ENCODE measurements at regions of chr17 and their contacts with region 1.

Region 1: GRCh38 chr17:32609884-32610650 is 123.3 kb downstream of the CDK5R1 start:
- DNase-seq: no peak
- H3K4me3 ChIP-seq: no peak overlapping the region
- H3K27ac ChIP-seq: no peak overlapping the region
- H3K4me1 ChIP-seq: peaks cover 0 to 11% (median 7%) of the 10 kb centered on the region in 6 donors
- H3K27me3 ChIP-seq: no peaks in the 10 kb centered on the region
- CTCF ChIP-seq: no peak
- POLR2A ChIP-seq: no peak

Region 2: DNA sequence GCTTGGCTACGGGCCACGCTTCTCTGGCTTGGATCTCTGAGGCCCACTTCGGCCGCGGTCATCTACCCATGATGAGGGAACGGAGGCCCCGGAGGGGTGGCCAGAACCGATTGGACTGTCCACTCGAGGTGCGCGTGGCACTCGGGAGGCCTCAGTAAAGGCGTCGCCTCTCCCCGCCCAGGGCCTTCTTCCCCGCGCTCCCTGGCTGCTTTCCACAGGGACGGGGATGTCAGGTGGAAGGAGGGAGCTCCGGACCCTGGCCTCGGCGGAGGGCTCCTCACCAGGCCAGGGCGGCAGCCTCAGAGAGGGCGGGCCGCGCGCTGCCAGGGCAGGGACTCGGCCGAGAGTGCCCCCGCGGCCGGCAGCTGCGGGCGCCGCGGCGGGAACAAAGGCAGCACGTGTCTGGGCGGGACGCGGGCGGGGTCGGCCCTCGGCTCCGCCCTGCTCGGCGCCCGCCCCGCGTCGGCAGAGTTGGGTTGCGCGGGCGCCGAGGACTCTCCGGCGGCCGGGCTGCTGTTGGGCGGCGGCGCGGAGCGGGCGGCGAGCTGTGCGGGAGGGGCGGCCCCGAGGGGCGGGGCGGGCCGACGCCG is 123.9 kb before region 1 on chr17:
- intact Hi-C with region 1: loop called (anchors 5 kb)
- DNase-seq: peak; percentile 94
- H3K4me3 ChIP-seq: peak overlapping the region; percentile 23 to 88 (median 60)
- H3K27ac ChIP-seq: peak overlapping the region in 7 of 8 donors; percentile 52 to 92 (median 80)
- H3K4me1 ChIP-seq: peaks cover 10 to 74% (median 58%) of the 10 kb centered on the region in 6 donors
- H3K27me3 ChIP-seq: no peaks in the 10 kb centered on the region
- CTCF ChIP-seq: no peak
- POLR2A ChIP-seq: no peak

Region 3: GRCh38 chr17:32586666-32587065 is 23.4 kb before region 1 on chr17:
- intact Hi-C with region 1: no loop called
- DNase-seq: no peak
- H3K4me3 ChIP-seq: no peak overlapping the region
- H3K27ac ChIP-seq: no peak overlapping the region
- H3K4me1 ChIP-seq: peaks cover 0 to 11% (median 0%) of the 10 kb centered on the region in 6 donors
- H3K27me3 ChIP-seq: no peaks in the 10 kb centered on the region
- CTCF ChIP-seq: no peak
- POLR2A ChIP-seq: no peak

Region 4: GRCh38 chr17:33674685-33675084 is 1064.6 kb after region 1 on chr17:
- intact Hi-C with region 1: no loop called
- DNase-seq: no peak
- H3K4me3 ChIP-seq: no peak overlapping the region
- H3K27ac ChIP-seq: no peak overlapping the region
- H3K4me1 ChIP-seq: no peaks in the 10 kb centered on the region
- H3K27me3 ChIP-seq: peaks cover 0 to 17% (median 0%) of the 10 kb centered on the region in 7 donors
- CTCF ChIP-seq: peak in 10 of 11 experiments; percentile 18 to 73 (median 56)
- POLR2A ChIP-seq: no peak